ENCODE measurements at regions of chr17 and their contacts with region 1.

Region 1: DNA sequence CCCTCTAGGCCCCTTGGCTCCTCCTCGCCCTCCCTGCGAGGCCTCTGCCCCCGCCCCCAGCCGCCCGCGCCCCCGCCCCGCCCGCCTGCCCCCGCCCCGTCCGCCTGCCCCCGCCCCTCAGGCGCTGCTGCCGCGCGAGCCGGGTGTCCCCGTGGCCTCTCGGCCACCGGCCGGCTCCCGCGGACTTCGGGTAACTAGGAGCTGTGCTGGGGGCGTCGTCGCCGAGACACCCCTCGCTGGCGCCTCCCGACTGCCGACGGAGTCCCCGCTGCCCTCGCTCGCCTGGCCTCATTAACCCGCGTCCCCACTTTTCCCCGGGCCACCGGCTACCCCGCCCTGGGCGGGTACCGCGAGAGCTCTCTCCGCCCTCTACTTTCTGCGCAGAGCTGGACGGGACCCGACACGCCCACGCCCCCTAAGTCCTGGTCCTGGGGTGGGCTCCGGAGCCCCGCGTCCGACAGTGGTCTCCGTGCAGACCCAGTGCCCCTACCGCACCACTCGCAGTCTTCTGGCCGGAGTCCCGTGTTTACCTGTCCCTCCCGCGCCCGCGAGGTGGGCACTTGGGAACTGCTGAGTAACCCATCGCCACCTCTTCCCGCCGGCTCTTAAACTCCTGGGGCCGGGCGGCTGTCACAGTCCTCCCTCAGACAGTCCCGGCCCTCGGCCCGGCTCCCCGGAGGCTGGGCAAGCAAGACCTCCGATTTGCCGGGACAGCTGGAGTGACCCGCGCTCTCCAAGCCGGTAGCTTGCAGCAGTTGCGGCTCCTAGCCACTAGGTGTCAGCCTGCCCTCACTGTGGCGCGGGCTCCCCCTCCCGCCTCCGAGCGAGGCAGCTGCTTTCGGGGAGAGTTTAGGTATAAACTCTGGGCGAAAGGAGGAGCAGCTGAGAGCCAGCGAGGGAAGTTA is at the start of gene TLCD1:
- DNase-seq: peak; percentile 86 to 91 (median 88)
- H3K4me3 ChIP-seq: peak within 1 kb of the TSS; percentile 57 to 85
- H3K4me3 Mint-ChIP-seq: peak within 1 kb of the TSS; percentile 91 to 98 (median 96)
- H3K27ac ChIP-seq: peak within 1 kb of the TSS; percentile 98
- H3K27ac Mint-ChIP-seq: peak within 1 kb of the TSS; percentile 99 to 100 (median 100)
- H3K4me1 ChIP-seq: peaks cover 46% of the 10 kb centered on the region
- H3K4me1 Mint-ChIP-seq: peaks cover 36 to 70% (median 48%) of the 10 kb centered on the region in 4 donors
- H3K27me3 ChIP-seq: no peaks in the 10 kb centered on the region
- H3K27me3 Mint-ChIP-seq: no peaks in the 10 kb centered on the region
- total RNA-seq, gene TLCD1: 1.0 to 2.2 TPM

Region 2: GRCh38 chr17:28700830-28701492 is 25.5 kb before region 1 on chr17:
- CTCF ChIA-PET with region 1: no interaction called
- POLR2A ChIA-PET with region 1: no interaction called
- intact Hi-C with region 1: no loop called
- DNase-seq: no peak
- H3K4me3 ChIP-seq: no peak overlapping the region
- H3K4me3 Mint-ChIP-seq: no peak overlapping the region
- H3K27ac ChIP-seq: no peak overlapping the region
- H3K27ac Mint-ChIP-seq: no peak overlapping the region
- H3K4me1 ChIP-seq: no peaks in the 10 kb centered on the region
- H3K4me1 Mint-ChIP-seq: no peaks in the 10 kb centered on the region
- H3K27me3 ChIP-seq: no peaks in the 10 kb centered on the region
- H3K27me3 Mint-ChIP-seq: no peaks in the 10 kb centered on the region

Region 3: GRCh38 chr17:28710861-28711722 is 15.4 kb before region 1 on chr17:
- CTCF ChIA-PET with region 1: interaction called, 22 read pairs
- POLR2A ChIA-PET with region 1: interaction called, 93 read pairs
- intact Hi-C with region 1: no loop called
- DNase-seq: peak; percentile 85 to 88 (median 87)
- H3K4me3 ChIP-seq: peak overlapping the region; percentile 63 to 69
- H3K4me3 Mint-ChIP-seq: peak overlapping the region; percentile 91 to 95 (median 94)
- H3K27ac ChIP-seq: peak overlapping the region; percentile 85
- H3K27ac Mint-ChIP-seq: peak overlapping the region; percentile 92 to 97 (median 96)
- H3K4me1 ChIP-seq: peaks cover 13% of the 10 kb centered on the region
- H3K4me1 Mint-ChIP-seq: peaks cover 13 to 30% (median 20%) of the 10 kb centered on the region in 4 donors
- H3K27me3 ChIP-seq: peaks cover 7% of the 10 kb centered on the region
- H3K27me3 Mint-ChIP-seq: peaks cover 4 to 11% of the 10 kb centered on the region in 2 donors

Region 4: GRCh38 chr17:28763804-28764266 is 37.4 kb after region 1 on chr17:
- CTCF ChIA-PET with region 1: interaction called, 102 read pairs
- POLR2A ChIA-PET with region 1: interaction called, 528 read pairs
- intact Hi-C with region 1: loop called (anchors 1 kb)
- DNase-seq: peak; percentile 71 to 82 (median 77)
- H3K4me3 ChIP-seq: no peak overlapping the region
- H3K4me3 Mint-ChIP-seq: no peak overlapping the region
- H3K27ac ChIP-seq: no peak overlapping the region
- H3K27ac Mint-ChIP-seq: peak overlapping the region in 5 of 7 donors; percentile 77 to 84 (median 82)
- H3K4me1 ChIP-seq: no peaks in the 10 kb centered on the region
- H3K4me1 Mint-ChIP-seq: peaks cover 3 to 8% (median 4%) of the 10 kb centered on the region in 4 donors
- H3K27me3 ChIP-seq: no peaks in the 10 kb centered on the region
- H3K27me3 Mint-ChIP-seq: no peaks in the 10 kb centered on the region

Region 5: DNA sequence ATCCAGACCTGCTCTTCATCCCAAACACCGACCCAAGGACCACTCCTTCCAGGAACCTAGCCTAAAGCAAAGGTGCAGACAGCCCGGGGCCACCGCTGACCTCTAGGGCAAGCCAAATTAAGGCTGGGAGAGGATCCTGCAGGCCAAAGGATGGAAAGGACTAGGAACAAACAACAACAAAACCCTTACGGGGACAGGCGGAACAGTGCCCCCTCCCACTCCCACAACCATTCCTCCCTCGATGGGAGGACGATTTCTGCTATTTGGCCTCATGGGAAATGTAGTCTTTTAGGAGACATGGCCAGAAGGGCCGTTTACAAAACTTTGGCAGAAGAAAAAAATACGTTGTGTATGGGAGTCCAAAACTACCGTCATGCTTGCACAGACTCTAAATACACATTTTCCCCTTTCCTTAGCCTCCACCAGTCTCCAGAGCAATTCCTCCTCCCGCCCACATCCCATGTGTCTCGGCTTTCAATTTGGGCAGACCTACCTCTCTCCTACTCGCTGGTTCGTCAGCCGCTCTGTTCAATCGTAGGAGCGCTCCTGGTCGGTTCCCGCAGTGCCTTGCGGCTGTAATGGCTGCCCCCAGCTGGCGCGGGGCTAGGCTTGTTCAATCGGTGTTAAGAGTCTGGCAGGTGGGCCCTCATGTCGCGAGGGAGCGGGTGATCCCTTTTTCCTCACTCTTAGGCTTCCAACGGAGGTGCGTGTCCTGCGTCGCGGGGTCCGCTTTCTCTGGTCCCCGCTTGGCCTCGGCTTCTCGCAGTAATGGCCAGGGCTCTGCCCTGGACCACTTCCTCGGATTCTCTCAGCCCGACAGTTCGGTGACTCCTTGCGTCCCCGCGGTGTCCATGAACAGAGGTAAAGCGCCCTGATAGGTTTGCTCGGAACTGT is 128.2 kb after region 1 on chr17 and contains the start of gene ERAL1:
- CTCF ChIA-PET with region 1: interaction called, 6 read pairs
- POLR2A ChIA-PET with region 1: interaction called, 3 read pairs
- intact Hi-C with region 1: loop called (anchors 5 kb)
- DNase-seq: peak; percentile 82 to 90 (median 85)
- H3K4me3 ChIP-seq: peak within 1 kb of the TSS; percentile 88 to 91
- H3K4me3 Mint-ChIP-seq: peak within 1 kb of the TSS; percentile 90 to 98 (median 95)
- H3K27ac ChIP-seq: peak within 1 kb of the TSS; percentile 73
- H3K27ac Mint-ChIP-seq: peak within 1 kb of the TSS; percentile 82 to 96 (median 94)
- H3K4me1 ChIP-seq: peaks cover 13% of the 10 kb centered on the region
- H3K4me1 Mint-ChIP-seq: peaks cover 4 to 19% (median 11%) of the 10 kb centered on the region in 4 donors
- H3K27me3 ChIP-seq: no peaks in the 10 kb centered on the region
- H3K27me3 Mint-ChIP-seq: no peaks in the 10 kb centered on the region
- total RNA-seq, gene ERAL1: 23.5 to 24.3 TPM

Region 6: GRCh38 chr17:28902819-28903545 is 176.5 kb after region 1 on chr17 and contains the start of gene DHRS13:
- CTCF ChIA-PET with region 1: interaction called, 25 read pairs
- POLR2A ChIA-PET with region 1: interaction called, 45 read pairs
- intact Hi-C with region 1: loop called (anchors 1 kb)
- DNase-seq: peak; percentile 93 to 98 (median 96)
- H3K4me3 ChIP-seq: peak within 1 kb of the TSS; percentile 77 to 95
- H3K4me3 Mint-ChIP-seq: peak within 1 kb of the TSS; percentile 83 to 97 (median 90)
- H3K27ac ChIP-seq: peak within 1 kb of the TSS; percentile 76
- H3K27ac Mint-ChIP-seq: peak within 1 kb of the TSS; percentile 89 to 97 (median 93)
- H3K4me1 ChIP-seq: peaks cover 35% of the 10 kb centered on the region
- H3K4me1 Mint-ChIP-seq: peaks cover 31 to 50% (median 37%) of the 10 kb centered on the region in 4 donors
- H3K27me3 ChIP-seq: no peaks in the 10 kb centered on the region
- H3K27me3 Mint-ChIP-seq: no peaks in the 10 kb centered on the region
- total RNA-seq, gene DHRS13: 44.6 to 49.6 TPM

Region 7: GRCh38 chr17:28967221-28968140 is 241.0 kb after region 1 on chr17:
- CTCF ChIA-PET with region 1: interaction called, 10 read pairs
- POLR2A ChIA-PET with region 1: no interaction called
- intact Hi-C with region 1: no loop called
- DNase-seq: peak in 1 of 5 donors; percentile 25
- H3K4me3 ChIP-seq: no peak overlapping the region
- H3K4me3 Mint-ChIP-seq: no peak overlapping the region
- H3K27ac ChIP-seq: no peak overlapping the region
- H3K27ac Mint-ChIP-seq: peak overlapping the region in 2 of 7 donors; percentile 19 to 39
- H3K4me1 ChIP-seq: no peaks in the 10 kb centered on the region
- H3K4me1 Mint-ChIP-seq: peaks cover 0 to 3% (median 0%) of the 10 kb centered on the region in 4 donors
- H3K27me3 ChIP-seq: no peaks in the 10 kb centered on the region
- H3K27me3 Mint-ChIP-seq: peaks cover 8 to 14% of the 10 kb centered on the region in 2 donors

Region 8: DNA sequence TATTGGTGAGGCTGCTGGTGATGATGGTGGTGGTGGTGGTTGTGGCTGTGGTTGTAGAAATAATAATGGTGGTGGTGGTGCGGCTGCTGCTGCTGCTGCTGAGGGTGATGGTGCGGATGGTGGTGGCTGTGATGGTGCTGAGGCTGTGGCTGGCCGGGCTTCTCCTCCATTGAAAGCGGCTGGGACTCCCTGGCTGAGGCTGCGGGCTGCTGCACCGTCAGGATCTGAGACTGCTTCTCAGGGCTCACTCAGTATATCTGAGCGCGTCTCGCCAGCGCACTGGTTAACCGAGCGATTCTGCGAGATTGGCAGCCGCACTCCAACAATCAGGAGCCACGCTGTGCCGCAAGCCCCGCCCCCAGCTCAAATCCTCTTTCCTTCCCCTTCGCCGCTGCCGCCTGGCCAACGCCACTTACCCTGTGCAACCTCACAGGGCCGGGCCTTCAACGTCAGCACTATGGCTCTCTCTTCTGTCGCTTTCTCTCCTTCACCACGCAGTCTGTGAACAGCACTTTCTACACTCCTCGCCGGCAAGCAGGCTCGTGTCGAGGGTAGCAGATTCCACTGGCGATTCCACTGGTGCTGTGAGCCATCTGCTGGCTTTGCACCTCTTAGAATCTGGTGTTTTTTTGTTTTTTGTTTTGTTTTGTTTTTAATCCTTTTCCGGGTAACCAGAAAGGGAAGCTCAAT is 567.6 kb after region 1 on chr17 and contains the start of gene NUFIP2:
- CTCF ChIA-PET with region 1: no interaction called
- POLR2A ChIA-PET with region 1: interaction called, 3 read pairs
- intact Hi-C with region 1: loop called (anchors 10 kb)
- DNase-seq: peak; percentile 95 to 99 (median 98)
- H3K4me3 ChIP-seq: peak within 1 kb of the TSS; percentile 77 to 79
- H3K4me3 Mint-ChIP-seq: peak within 1 kb of the TSS; percentile 99 to 100 (median 100)
- H3K27ac ChIP-seq: peak within 1 kb of the TSS; percentile 77
- H3K27ac Mint-ChIP-seq: peak within 1 kb of the TSS; percentile 98 to 100 (median 99)
- H3K4me1 ChIP-seq: peaks cover 41% of the 10 kb centered on the region
- H3K4me1 Mint-ChIP-seq: peaks cover 20 to 51% (median 34%) of the 10 kb centered on the region in 4 donors
- H3K27me3 ChIP-seq: no peaks in the 10 kb centered on the region
- H3K27me3 Mint-ChIP-seq: no peaks in the 10 kb centered on the region
- total RNA-seq, gene NUFIP2: 77.5 to 85.1 TPM